ENCODE measurements at regions of chr1 and their contacts with region 1.

Region 1: GRCh38 chr1:95116580-95117206 is 462 bp upstream of the TLCD4 start:
- DNase-seq: peak; percentile 78
- ATAC-seq: peak; percentile 82

Region 2: DNA sequence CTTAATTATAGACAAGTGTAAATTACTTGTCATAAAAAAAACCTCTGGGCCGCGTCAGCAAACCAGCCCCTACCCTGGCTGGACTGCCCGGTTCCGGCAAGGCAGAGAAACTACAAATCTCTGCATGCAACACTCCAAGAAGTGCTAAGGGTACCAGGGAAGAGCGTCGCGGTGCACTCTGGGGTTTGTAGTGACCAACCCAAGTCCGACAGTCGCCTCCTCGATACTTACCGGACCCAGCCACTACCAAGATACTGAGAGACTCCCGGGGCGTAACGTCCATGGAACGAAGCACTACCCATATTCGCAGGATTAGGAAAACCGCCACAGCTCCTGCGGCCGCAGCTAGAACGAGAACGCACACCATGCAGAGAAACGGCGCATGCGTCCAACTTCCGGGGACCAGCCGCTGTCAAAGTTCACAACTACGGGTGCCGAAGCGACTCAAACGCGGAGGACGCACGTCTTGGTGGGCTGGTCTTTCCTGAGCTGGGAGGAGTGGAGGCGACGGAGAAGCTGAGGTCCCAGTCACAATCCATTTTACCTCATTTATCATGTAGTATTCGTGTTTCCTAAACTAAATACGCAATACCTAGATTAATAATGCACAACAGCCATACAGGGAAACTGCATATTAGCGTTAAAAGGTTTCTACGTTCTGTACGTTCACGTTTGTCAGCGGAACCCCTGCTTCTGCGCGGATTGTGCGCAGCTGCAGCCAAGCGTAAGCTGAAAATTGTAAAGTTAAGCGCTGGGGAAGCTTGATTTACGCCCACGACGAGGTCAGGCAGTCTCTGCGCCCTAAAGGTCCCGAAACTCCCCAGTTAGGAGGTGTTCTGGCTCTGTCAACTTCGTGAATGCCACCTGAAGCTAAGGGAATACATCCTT is 43.9 kb before region 1 on chr1 and contains the start of gene ALG14:
- intact Hi-C with region 1: loop called (anchors 2 kb)
- DNase-seq: peak; percentile 95
- ATAC-seq: peak; percentile 99
- total RNA-seq, gene ALG14: 2.0 TPM

Region 3: DNA sequence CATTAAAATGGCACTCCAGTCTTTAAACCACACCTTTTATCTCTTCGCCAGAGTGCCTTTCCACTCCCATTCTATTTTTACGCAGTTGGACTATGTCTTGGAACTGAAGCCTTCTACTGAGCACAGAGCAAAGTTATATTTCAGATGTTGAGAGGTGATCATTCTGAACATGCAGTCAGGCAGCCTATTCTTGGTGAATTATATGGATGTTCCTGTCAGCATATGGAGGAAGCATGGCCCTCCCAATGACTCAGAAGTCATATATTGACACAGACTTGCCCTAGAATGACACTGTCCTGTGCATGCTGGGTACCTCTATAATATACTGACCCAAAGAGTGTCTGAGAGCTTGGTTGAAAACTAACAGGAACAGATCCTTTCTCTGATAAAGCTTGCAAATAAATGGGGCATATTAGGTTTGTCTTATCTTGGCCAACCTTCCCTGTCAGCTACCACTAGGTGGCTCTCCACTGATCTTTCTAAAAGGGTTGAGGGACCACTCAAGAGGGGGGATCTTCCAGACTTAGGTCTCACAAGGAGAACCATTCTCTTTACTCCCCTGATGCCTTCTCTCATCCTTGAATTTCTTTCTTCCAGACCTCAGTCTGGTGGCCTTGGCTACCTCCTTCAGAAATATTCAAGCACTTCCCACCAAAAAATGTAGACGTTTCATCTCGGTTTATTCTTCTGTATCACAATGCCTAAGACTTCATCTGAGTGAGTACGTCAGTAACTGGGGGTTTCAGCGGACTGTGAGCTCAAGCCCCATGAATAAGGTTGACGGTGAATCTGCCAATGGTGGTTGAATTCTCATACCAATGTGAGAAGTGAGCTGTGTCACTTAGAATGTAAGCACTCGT is 32.1 kb before region 1 on chr1:
- intact Hi-C with region 1: loop called (anchors 2 kb)
- DNase-seq: no peak
- ATAC-seq: no peak

Region 4: GRCh38 chr1:95197616-95198252 is 81.0 kb after region 1 on chr1:
- intact Hi-C with region 1: loop called (anchors 2 kb)
- DNase-seq: no peak
- ATAC-seq: peak; percentile 38